GM12878 (cell line): ENCODE measurements at regions of chr2 and their contacts with region 1.

Region 1: GRCh38 chr2:217650716-217651360 is 352.0 kb downstream of the TNS1 start:
- DNase-seq: no peak
- ATAC-seq: peak; percentile 93
- H3K4me3 ChIP-seq: no peak overlapping the region
- H3K27ac ChIP-seq: no peak overlapping the region
- H3K4me1 ChIP-seq: no peaks in the 10 kb centered on the region
- H3K27me3 ChIP-seq: no peaks in the 10 kb centered on the region; a peak in 2 of 4 replicates
- CTCF ChIP-seq: peak; percentile 65 to 87 (median 79)
- EP300 ChIP-seq: no peak
- POLR2A ChIP-seq: no peak
- RAD21 ChIP-seq: peak; percentile 62

Region 2: DNA sequence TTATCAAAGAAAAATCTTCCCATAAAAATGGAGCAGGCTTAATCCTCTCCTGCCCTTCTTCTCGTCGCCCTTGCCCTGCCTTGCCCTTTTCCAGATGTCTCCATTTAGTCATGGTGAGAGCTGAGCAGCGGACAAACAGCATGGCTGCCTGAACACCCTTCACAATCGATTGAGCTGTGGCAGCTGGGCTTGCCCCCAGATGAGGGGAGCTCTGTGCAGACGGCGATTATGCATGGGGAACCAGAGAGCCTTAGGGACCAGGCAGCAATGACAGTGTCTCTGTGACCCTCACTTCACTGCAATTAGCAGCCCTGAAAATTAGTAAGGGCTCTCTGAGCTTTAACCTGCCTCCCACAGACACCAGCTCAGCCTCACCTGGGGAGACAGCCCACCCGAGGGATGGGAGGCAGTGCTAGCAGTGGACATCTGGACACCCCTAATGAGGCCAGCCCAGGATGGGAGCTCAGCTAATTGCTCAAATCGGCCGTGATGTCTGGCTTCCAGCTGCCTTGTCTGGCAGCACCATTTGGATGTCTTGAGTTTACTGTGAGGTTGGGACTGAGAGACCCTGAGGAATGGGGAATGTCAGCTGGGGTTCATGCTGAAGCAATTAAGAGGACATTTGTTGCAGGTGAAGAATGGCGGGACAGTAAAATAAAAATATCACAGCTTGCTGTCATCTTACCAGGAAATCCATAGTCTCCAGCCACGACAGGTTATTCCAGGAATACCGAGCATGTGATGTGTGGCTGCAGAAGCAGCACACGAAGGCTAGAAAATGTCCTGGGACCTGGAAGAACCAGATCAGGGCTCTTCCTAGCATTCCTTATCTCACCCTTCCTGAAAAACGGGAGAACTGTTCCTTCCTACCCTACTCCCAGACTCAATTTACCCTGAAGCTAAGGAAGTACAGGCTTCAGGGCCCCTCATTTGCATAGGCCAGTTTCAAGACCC is 13.6 kb before region 1 on chr2:
- CTCF ChIA-PET with region 1: interaction called, 32 read pairs
- POLR2A ChIA-PET with region 1: no interaction called
- RAD21 ChIA-PET with region 1: interaction called, 3 read pairs
- SMC1A ChIA-PET with region 1: interaction called, 4 read pairs
- in situ Hi-C with region 1: no loop called
- intact Hi-C with region 1: no loop called
- DNase-seq: no peak
- ATAC-seq: no peak
- H3K4me3 ChIP-seq: no peak overlapping the region
- H3K27ac ChIP-seq: no peak overlapping the region
- H3K4me1 ChIP-seq: no peaks in the 10 kb centered on the region
- H3K27me3 ChIP-seq: peaks cover 0 to 2% of the 10 kb centered on the region in 2 experiments; a peak in 3 of 4 replicates
- CTCF ChIP-seq: no peak
- EP300 ChIP-seq: no peak
- POLR2A ChIP-seq: no peak
- RAD21 ChIP-seq: no peak

Region 3: GRCh38 chr2:217666338-217666737 is 15.5 kb after region 1 on chr2:
- CTCF ChIA-PET with region 1: interaction called, 19 read pairs
- POLR2A ChIA-PET with region 1: no interaction called
- RAD21 ChIA-PET with region 1: no interaction called
- SMC1A ChIA-PET with region 1: interaction called, 3 read pairs
- in situ Hi-C with region 1: no loop called
- intact Hi-C with region 1: no loop called
- DNase-seq: no peak
- ATAC-seq: peak; percentile 78
- H3K4me3 ChIP-seq: no peak overlapping the region
- H3K27ac ChIP-seq: no peak overlapping the region
- H3K4me1 ChIP-seq: no peaks in the 10 kb centered on the region
- H3K27me3 ChIP-seq: no peaks in the 10 kb centered on the region
- CTCF ChIP-seq: no peak
- EP300 ChIP-seq: no peak
- POLR2A ChIP-seq: no peak
- RAD21 ChIP-seq: no peak